Mammary epithelial cell (primary cell): ENCODE measurements at regions of chr4 and their contacts with region 1.

Region 1: GRCh38 chr4:7398104-7398423 is 36.7 kb downstream of the PSAPL1 start:
- DNase-seq: peak; percentile 83
- H3K4me3 ChIP-seq: no peak overlapping the region
- H3K27ac ChIP-seq: peak overlapping the region; percentile 41
- H3K4me1 ChIP-seq: peaks cover 39% of the 10 kb centered on the region
- H3K27me3 ChIP-seq: no peaks in the 10 kb centered on the region
- CTCF ChIP-seq: peak in 1 of 2 donors; percentile 48

Region 2: DNA sequence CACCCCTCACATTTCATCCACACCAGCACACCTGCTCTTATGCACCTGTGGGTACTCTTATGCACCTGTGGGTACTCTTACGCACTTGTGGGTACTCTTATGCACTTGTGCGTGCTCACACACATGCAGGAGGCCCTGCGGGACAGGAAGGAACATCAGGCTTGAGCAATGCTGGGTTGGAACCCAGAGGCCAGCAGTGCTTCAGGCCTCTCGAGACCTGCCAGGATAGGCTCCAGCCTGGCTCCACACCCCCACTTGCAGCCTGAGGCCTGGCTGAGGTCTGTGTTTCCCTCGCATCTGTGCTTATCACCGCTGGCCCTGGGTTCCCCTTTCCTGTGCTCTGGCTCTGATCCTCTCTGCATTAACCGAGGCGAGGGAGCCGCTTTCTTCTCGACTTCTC is 171.1 kb before region 1 on chr4:
- CTCF ChIA-PET with region 1: no interaction called
- dilution Hi-C with region 1: loop called (anchors 10 kb)
- in situ Hi-C with region 1: no loop called
- intact Hi-C with region 1: no loop called
- DNase-seq: no peak
- H3K4me3 ChIP-seq: no peak overlapping the region
- H3K27ac ChIP-seq: no peak overlapping the region
- H3K4me1 ChIP-seq: no peaks in the 10 kb centered on the region
- H3K27me3 ChIP-seq: no peaks in the 10 kb centered on the region
- CTCF ChIP-seq: no peak

Region 3: DNA sequence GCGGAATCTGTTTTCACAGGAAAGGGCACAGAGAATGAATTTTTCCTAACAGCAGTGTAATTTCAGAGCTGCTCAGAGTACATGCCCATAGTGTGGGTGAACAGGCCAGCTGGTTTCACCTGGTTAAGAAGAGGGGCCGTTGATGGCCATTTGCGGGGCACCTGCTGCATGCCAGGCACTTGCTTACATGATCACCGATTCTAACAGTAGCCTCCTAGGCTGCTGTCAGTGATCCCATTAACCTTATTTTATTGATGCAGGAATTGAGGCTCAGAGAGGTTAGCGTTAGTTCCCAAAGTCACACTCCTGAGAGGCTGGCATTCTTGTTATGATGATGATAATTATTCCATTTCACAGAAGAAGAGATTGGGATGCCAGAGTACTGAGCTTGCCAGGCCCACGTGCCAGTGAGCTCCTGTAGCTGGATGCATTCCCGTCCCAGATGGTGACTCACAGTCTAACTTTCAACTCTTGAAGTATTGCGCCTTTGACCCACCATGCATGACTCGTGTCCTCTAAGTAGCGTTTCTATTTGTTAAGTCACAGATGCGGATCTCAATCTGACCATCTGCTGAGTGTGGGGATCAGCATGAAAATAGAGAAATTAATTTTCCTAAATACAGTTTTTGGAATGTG is 39.8 kb before region 1 on chr4:
- CTCF ChIA-PET with region 1: no interaction called
- dilution Hi-C with region 1: loop called (anchors 5 kb)
- in situ Hi-C with region 1: no loop called
- intact Hi-C with region 1: no loop called
- DNase-seq: peak; percentile 78
- H3K4me3 ChIP-seq: no peak overlapping the region
- H3K27ac ChIP-seq: no peak overlapping the region
- H3K4me1 ChIP-seq: no peaks in the 10 kb centered on the region
- H3K27me3 ChIP-seq: no peaks in the 10 kb centered on the region
- CTCF ChIP-seq: no peak

Region 4: DNA sequence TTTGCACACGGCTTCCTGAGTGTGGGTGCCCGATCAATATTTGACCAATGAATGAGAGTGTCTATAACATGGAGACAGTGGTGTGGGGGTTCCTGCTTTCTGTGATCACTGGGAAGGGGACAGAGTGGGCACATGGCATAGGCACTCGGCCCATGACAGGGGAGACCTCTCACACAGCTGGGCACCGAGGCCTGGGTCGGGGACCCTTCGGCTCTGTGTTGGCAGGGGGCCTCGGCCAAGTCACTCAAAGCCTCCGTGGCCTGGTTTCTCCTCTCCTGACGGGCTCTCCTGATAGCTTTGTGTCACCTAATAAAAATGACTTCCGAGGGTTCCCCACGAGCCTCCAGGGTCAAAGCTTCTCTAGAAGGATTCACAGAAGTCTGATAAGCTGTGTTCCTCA is 80.6 kb after region 1 on chr4:
- CTCF ChIA-PET with region 1: no interaction called
- dilution Hi-C with region 1: loop called (anchors 5 kb)
- in situ Hi-C with region 1: no loop called
- intact Hi-C with region 1: no loop called
- DNase-seq: no peak
- H3K4me3 ChIP-seq: no peak overlapping the region
- H3K27ac ChIP-seq: no peak overlapping the region
- H3K4me1 ChIP-seq: no peaks in the 10 kb centered on the region
- H3K27me3 ChIP-seq: peaks cover 2% of the 10 kb centered on the region
- CTCF ChIP-seq: no peak

Region 5: DNA sequence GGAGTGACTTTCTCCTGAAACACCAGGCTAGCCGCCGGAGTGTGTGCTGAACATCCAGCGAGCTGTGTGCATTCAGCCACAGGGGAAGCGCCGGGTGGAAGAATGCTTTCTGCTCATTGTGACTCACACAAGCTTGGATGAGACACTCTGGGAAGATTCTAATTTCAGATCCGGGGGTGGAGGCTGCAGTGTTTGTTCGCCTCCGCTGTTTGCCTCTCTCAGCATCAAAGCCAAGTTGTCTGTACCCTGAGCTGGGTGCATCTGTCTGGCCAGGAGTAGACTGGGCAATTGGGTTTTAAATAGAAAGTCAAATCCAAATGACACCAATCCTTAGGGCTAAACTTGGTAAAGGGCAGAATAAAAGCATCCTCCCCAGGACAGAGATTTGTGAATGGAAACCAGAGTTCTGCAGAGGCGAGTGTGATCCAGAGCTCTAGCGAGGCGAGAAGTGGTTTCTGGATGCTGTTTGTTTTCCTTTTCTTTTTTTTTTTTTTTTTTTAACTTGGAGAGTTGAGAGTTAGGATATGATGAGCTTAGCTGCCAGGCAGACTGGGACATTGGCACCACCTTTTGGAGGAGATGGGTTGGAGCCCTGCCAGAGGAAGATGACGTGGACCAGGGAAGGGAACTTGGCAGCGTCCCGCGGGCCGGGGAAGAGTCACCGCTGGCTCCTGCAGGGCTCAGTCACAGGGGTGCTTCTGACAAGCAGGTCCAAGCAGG is 232.7 kb after region 1 on chr4:
- CTCF ChIA-PET with region 1: interaction called, 41 read pairs
- dilution Hi-C with region 1: no loop called
- in situ Hi-C with region 1: no loop called
- intact Hi-C with region 1: no loop called
- DNase-seq: peak; percentile 83
- H3K4me3 ChIP-seq: no peak overlapping the region
- H3K27ac ChIP-seq: no peak overlapping the region
- H3K4me1 ChIP-seq: peaks cover 18% of the 10 kb centered on the region
- H3K27me3 ChIP-seq: no peaks in the 10 kb centered on the region
- CTCF ChIP-seq: peak in 1 of 2 donors; percentile 16

Region 6: GRCh38 chr4:7753271-7753670 is 355.2 kb after region 1 on chr4:
- CTCF ChIA-PET with region 1: no interaction called
- dilution Hi-C with region 1: loop called (anchors 5 kb)
- in situ Hi-C with region 1: no loop called
- intact Hi-C with region 1: no loop called
- DNase-seq: peak; percentile 94
- H3K4me3 ChIP-seq: no peak overlapping the region
- H3K27ac ChIP-seq: peak overlapping the region; percentile 49
- H3K4me1 ChIP-seq: peaks cover 12% of the 10 kb centered on the region
- H3K27me3 ChIP-seq: no peaks in the 10 kb centered on the region
- CTCF ChIP-seq: no peak

Region 7: DNA sequence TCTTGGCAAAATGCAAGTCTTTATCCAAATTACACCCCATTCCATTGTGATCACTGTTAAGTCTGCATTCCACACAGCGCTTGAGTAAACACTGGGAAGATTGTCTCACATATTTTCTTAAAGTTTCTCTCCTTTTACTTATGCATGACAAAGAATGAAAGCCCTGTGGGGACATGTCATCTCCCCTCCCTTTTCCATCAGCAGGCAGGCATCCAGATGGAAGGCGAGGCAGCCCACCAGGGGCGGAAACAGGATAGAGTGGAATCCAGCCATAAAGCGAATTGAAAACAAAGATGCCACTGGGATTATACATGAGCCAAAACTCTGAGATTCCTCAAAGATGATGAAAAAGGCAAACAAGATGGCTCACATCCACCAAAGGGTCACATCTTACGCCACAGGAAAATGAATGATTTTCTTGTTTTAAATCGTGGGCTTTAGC is 463.4 kb after region 1 on chr4:
- CTCF ChIA-PET with region 1: no interaction called
- dilution Hi-C with region 1: no loop called
- in situ Hi-C with region 1: no loop called
- intact Hi-C with region 1: no loop called
- DNase-seq: peak; percentile 80
- H3K4me3 ChIP-seq: no peak overlapping the region
- H3K27ac ChIP-seq: peak overlapping the region; percentile 82
- H3K4me1 ChIP-seq: peaks cover 44% of the 10 kb centered on the region
- H3K27me3 ChIP-seq: no peaks in the 10 kb centered on the region
- CTCF ChIP-seq: no peak